ENCODE measurements at regions of chr2 and their contacts with region 1.

Region 1: GRCh38 chr2:100262555-100263320 is 59.6 kb downstream of the LONRF2 start:
- DNase-seq: peak; percentile 22
- H3K4me3 Mint-ChIP-seq: no peak overlapping the region
- H3K27ac Mint-ChIP-seq: no peak overlapping the region
- H3K4me1 Mint-ChIP-seq: no peaks in the 10 kb centered on the region
- H3K27me3 Mint-ChIP-seq: peaks cover 2% of the 10 kb centered on the region

Region 2: GRCh38 chr2:100381240-100381639 is 118.5 kb after region 1 on chr2:
- intact Hi-C with region 1: loop called (anchors 1 kb)
- DNase-seq: peak; percentile 56
- H3K4me3 Mint-ChIP-seq: no peak overlapping the region
- H3K27ac Mint-ChIP-seq: no peak overlapping the region
- H3K4me1 Mint-ChIP-seq: peaks cover 6% of the 10 kb centered on the region
- H3K27me3 Mint-ChIP-seq: peaks cover 7% of the 10 kb centered on the region